Activated CD8-positive, alpha-beta T cell treated with anti-CD3 and anti-CD28 coated beads, Interleukin-2, amount 10 ng/mL, durations not matched to agents 7 days and 5 days (primary cell): ENCODE measurements at regions of chr3 and their contacts with region 1.

Region 1: DNA sequence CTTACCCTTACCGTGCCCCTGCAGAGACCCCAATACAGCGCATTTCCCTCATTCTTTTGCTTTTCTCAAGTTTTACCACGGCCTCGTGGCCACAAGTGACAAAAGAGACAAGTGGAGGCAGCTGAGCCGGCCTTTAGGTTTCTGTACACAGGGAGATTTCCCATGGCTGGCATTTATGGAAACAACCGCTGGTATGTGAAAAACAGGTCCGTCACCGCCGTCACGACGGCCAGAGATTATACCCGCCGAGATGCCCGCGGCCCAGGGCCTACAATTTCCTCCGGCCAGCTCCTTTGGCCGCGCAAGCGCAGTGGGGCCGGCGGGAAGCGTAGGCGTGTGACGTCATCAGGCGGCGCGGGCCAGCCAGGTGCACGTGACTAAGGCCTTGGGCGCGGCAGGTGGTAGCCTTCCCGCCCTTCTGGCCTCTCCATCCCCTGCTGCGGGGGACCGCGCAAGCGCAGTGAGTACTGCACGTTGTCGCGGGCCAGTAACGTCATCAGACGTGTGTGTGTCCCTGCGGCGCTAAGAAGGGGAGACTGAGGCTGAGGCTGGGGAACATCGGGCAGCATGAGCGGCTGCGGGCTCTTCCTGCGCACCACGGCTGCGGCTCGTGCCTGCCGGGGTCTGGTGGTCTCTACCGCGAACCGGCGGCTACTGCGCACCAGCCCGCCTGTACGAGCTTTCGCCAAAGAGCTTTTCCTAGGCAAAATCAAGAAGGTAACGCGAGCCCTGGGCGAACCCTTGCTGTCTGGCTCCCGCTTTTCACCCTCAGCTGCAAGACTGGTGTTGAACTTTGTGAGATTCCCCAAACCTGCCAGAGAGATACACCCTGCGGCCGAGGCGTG is at the start of gene ACAD9:
- DNase-seq: peak; percentile 97
- ATAC-seq: peak; percentile 96
- H3K4me3 Mint-ChIP-seq: peak within 1 kb of the TSS; percentile 83
- H3K27ac Mint-ChIP-seq: peak within 1 kb of the TSS; percentile 90
- H3K4me1 Mint-ChIP-seq: peaks cover 57% of the 10 kb centered on the region
- H3K27me3 Mint-ChIP-seq: peaks cover 4% of the 10 kb centered on the region
- total RNA-seq, gene ACAD9: 61.3 to 68.3 TPM

Region 2: GRCh38 chr3:128845778-128846485 is 33.4 kb before region 1 on chr3:
- CTCF ChIA-PET with region 1: interaction called, 28 read pairs
- POLR2A ChIA-PET with region 1: interaction called, 7 read pairs
- DNase-seq: peak; percentile 82
- ATAC-seq: peak; percentile 84
- H3K4me3 Mint-ChIP-seq: peak overlapping the region; percentile 68
- H3K27ac Mint-ChIP-seq: peak overlapping the region; percentile 82
- H3K4me1 Mint-ChIP-seq: peaks cover 19% of the 10 kb centered on the region
- H3K27me3 Mint-ChIP-seq: no peaks in the 10 kb centered on the region

Region 3: DNA sequence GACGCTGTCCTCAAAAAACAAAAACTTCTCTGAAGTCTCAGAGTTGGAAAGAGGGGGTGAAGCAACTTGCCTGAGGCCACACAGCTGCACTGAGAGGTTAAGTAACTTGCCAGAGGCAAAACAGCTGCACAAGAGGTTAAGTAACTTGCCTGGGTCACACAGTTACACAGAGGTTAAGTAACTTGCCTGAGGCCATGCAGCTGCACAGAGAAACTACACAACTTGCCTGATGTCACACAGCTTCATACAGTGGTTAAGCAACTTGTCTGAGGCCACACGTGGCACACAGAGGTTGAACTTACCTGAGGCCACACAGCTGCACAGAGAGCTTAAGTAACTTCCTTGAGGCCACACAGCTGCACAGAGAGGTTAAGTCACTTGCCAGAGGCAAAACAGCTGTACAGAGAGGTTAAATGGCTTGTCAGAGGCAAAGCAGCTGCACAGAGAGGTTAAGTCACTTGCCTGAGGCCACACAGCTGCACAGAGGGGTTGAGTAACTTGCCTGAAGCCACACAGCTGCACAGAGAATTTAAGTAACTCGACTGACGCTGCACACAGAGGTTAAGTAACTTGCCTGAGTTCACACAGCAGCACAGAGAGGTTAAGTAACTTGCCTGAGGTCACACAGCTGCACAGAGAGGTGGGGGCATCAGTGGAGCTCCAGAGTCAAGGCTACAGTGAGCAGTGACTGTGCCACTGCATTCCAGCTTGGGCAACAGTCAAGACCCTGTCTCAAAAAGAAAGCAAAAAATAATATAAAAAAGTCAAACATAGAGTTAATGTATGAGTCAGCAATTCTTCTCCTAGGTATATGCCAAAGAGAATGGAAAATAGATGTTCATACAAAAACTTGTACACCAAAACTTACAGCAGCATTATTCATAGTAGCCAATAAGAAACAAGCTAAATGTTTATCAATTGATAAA is 11.9 kb before region 1 on chr3:
- CTCF ChIA-PET with region 1: interaction called, 11 read pairs
- POLR2A ChIA-PET with region 1: interaction called, 4 read pairs
- DNase-seq: no peak
- ATAC-seq: no peak
- H3K4me3 Mint-ChIP-seq: no peak overlapping the region
- H3K27ac Mint-ChIP-seq: no peak overlapping the region
- H3K4me1 Mint-ChIP-seq: peaks cover 1% of the 10 kb centered on the region
- H3K27me3 Mint-ChIP-seq: no peaks in the 10 kb centered on the region

Region 4: DNA sequence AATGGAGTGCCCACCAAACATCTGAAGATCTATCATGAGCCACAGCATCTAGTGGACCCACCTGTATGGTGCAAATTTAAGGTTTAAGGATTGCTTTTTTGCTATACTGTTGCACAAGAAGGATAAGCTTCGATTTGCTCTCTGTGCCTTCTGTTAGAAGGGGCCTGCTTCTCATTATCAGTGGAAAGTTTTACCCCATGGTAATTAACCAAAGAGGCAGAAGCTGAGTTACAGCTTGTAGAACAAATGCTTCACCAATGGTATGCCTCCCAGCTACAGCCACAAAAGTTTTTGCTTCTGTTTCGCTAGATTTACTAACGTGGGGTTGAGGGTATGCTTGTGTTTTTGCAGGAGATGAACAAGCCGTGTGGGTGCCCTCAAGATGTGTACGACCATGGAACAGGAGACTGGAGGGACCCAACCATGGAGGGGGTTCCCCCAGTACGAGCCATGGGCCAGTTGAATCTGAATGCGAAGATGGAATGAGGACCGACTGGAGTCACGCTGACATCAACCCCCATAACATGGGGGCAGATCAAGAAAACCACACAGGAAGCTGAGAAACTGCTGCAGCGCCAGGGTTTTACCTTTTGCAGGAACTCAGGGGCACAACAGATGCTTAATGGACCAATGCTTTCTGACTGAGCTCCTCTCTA is 43.6 kb after region 1 on chr3:
- CTCF ChIA-PET with region 1: interaction called, 75 read pairs
- POLR2A ChIA-PET with region 1: interaction called, 13 read pairs
- DNase-seq: peak; percentile 76
- ATAC-seq: peak; percentile 73
- H3K4me3 Mint-ChIP-seq: peak overlapping the region; percentile 70
- H3K27ac Mint-ChIP-seq: peak overlapping the region; percentile 81
- H3K4me1 Mint-ChIP-seq: peaks cover 29% of the 10 kb centered on the region
- H3K27me3 Mint-ChIP-seq: peaks cover 3% of the 10 kb centered on the region

Region 5: DNA sequence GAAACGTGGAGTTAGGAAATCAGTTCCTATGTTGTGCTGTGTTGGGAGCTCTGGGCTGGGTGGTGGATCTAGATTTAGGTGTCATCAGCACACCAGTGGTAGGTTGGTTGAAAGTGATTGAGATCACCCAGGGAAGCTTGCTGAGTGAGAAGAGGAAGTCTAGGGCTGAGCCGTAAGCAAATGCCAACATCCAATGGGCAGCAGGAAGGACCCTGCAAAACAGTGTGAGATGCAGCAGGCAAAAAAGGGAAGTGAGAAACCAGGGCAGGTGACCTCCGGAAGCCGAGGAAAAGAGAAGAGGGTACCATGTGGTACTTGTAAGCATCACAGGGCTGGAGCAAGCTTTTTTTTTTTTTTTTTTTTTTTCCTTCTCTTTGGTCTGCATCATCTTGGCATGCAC is 354.2 kb after region 1 on chr3:
- CTCF ChIA-PET with region 1: no interaction called
- POLR2A ChIA-PET with region 1: no interaction called
- DNase-seq: peak; percentile 31
- ATAC-seq: peak; percentile 38
- H3K4me3 Mint-ChIP-seq: peak overlapping the region; percentile 6
- H3K27ac Mint-ChIP-seq: peak overlapping the region; percentile 89
- H3K4me1 Mint-ChIP-seq: peaks cover 75% of the 10 kb centered on the region
- H3K27me3 Mint-ChIP-seq: no peaks in the 10 kb centered on the region